ENCODE measurements at regions of chr12 and their contacts with region 1.

Region 1: DNA sequence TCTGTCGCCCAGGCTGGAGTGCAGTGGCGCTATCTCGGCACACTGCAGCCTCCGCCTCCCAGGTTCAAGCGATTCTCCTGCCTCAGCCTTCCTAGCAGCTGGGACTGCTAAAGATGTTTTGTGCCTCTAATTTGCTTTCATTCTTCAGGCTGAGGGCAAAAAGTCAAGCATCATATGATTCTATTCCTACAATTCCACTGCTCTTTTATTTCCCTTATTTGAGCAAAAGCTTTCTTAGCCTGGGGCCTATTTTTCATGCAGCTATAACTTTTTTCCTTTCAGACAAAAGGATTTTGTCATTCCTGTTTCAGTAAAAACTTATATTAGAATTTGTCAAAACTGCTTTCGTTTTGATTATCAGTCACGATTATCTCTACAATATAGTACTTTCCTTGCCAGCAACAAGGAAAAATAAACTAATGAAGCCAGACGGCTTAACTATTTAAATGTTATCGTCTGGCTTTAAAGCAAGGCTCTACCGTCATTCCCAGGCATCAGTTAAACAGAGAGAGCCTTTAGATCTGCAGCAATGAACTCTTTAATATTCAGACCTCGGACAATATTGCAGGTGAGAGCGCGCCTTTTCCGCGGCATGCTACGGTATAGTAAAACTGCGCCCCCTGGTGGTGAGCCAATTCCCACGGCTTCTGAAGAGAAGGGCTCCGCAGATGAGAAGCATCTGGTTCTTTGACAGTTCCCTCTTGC is 1.4 kb upstream of the SLC2A13 start:
- DNase-seq: peak; percentile 88 to 98 (median 93)
- ATAC-seq: peak; percentile 56 to 58
- H3K4me3 ChIP-seq: peak overlapping the region; percentile 50
- H3K27ac ChIP-seq: no peak overlapping the region
- H3K4me1 ChIP-seq: peaks cover 2% of the 10 kb centered on the region
- H3K27me3 ChIP-seq: no peaks in the 10 kb centered on the region

Region 2: DNA sequence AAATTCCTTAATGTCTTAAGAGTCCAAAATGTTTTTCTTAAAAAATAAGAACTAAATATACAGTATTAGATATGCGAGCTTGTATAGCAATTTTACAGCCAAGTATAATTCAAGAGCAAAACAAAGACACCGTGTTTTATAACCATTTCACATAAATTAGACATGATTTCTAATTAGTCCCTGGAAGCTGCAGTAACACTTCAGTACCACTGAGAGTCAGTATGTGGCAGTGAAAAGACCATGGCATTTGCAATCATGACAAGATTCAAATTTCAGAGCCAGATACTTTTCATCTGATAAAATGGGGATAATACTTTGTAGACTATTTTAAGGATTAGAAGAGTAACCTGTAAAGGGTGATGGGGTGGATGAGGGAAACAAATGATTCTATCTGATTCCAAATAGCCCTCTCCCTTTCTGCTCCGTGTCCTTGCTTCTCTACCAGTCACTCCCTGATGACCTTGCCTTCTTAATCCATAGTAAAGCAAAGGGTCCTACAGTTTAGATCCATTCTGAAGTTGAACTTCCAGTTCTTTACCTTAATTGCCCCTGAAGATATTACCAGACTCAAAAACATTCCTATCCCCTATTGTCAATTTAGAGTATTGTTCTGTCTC is 342.2 kb before region 1 on chr12:
- intact Hi-C with region 1: loop called (anchors 5 to 10 kb)
- DNase-seq: no peak
- ATAC-seq: no peak
- H3K4me3 ChIP-seq: no peak overlapping the region
- H3K27ac ChIP-seq: no peak overlapping the region
- H3K4me1 ChIP-seq: no peaks in the 10 kb centered on the region
- H3K27me3 ChIP-seq: no peaks in the 10 kb centered on the region

Region 3: DNA sequence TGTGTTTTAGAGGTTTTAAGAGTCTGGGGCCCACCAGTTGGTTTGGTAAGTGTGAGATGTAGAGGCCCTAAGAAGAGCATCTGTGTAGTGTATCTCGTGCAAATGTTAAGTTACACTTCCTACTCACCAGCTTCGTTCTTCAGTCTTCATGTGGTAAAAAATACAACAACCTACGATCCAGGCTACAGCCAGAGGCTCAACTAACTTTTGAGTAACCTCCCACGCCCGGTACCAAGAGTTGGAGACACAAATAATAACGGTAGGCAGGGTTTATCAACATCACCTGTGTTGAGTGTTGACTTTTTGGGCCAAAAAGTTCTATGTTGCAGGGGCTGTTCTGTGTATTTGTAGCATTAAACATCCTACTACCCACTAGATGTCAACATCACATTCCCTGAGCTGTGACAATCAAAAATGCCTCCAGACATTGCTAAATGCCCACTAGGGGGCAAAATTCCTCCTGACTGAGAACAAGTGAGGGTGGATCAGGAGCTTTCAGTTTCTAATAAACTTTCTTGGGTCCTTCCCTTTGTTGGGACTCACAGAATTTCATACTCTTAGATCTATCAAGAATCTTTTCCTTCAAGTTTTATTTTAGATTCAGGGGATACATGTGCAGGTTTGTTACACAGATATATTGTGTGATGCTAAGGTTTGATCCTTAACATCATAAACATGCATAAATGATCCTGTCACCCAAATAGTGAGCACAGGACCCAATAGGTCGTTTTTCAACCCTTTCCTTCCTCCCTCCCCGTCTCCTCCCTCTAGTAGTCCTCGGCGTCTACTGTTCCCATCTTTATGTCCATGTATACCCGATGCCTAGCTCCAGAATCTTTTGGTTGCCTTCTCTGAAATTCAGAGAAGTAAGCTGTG is 96.1 kb before region 1 on chr12:
- intact Hi-C with region 1: loop called (anchors 2 to 5 kb)
- DNase-seq: peak in 1 of 3 donors; percentile 26
- ATAC-seq: peak; percentile 94
- H3K4me3 ChIP-seq: peak overlapping the region; percentile 51
- H3K27ac ChIP-seq: peak overlapping the region; percentile 53
- H3K4me1 ChIP-seq: peaks cover 4% of the 10 kb centered on the region
- H3K27me3 ChIP-seq: no peaks in the 10 kb centered on the region

Region 4: GRCh38 chr12:40054554-40055227 is 52.6 kb before region 1 on chr12:
- intact Hi-C with region 1: loop called in 1 of 4 experiments (anchors 10 kb)
- DNase-seq: peak in 2 of 3 donors; percentile 44 to 60
- ATAC-seq: peak; percentile 93
- H3K4me3 ChIP-seq: no peak overlapping the region
- H3K27ac ChIP-seq: no peak overlapping the region
- H3K4me1 ChIP-seq: no peaks in the 10 kb centered on the region
- H3K27me3 ChIP-seq: no peaks in the 10 kb centered on the region

Measured in right cardiac atrium (tissue), 5 donors.